GM13977 (cell line): ENCODE measurements at regions of chr6 and their contacts with region 1.

Region 1: DNA sequence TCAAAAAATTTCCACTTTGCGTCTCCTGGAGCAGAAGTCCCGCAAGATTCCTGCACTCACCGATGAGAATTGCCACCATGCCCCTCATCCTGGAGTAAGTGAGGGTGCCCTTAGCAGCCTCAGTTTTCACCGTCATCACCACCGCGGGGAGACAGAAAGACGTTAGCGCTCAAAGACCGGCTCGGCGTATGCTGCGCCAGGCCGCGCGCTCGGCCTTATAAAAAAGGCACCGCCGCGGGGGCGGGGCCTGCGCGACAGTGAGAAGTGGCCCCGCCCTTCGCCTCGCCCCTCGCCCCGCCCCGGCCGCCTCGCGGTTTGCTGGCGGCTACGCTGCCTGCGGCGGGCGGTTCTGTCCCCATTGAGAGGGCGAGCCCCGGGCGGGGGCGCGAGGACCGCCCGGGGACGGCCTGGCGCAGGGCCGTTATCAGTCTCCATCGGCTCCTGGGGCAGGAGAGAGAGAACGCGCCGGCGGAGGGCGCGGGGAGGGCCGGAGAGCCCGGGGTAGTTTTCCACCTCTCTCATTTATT is 122.3 kb upstream of the SLC2A12 start:
- DNase-seq: peak; percentile 94
- CTCF ChIP-seq: peak; percentile 13

Region 2: GRCh38 chr6:134416418-134417154 is 241.9 kb after region 1 on chr6:
- in situ Hi-C with region 1: no loop called
- DNase-seq: no peak
- CTCF ChIP-seq: no peak

Region 3: GRCh38 chr6:134640975-134641429 is 466.3 kb after region 1 on chr6:
- in situ Hi-C with region 1: loop called (anchors 10 kb)
- DNase-seq: peak; percentile 66
- CTCF ChIP-seq: peak; percentile 88

Region 4: DNA sequence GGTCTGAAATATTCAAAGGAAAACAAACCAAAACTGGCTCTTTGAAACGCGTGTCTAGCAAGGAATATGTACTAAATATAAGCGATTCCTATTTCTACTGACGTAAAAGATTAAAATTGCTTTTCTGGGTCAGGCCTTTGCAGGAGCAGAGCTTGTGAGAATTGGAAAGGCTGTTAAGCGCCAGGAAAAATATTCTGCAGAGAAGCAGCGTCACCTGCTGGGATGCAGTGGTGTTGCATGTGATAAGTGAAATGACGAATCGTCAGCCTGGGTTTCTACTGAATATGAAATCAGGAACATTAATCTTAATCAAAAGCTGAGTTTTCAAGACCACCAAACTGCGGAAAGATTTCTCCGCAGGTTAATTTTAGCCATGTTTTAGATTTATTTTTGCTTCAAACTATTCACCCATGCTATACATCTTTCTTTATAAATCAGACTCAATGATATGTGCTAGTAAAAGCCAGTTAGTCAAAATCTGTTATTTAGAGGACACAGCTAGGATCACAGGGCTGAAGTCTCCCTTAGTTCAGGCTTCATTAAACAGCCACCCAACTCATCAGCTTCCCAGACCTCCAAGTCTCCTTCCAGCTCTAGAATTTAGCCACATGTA is 707.8 kb after region 1 on chr6:
- in situ Hi-C with region 1: loop called (anchors 25 kb)
- DNase-seq: peak; percentile 48
- CTCF ChIP-seq: peak; percentile 97

Region 5: DNA sequence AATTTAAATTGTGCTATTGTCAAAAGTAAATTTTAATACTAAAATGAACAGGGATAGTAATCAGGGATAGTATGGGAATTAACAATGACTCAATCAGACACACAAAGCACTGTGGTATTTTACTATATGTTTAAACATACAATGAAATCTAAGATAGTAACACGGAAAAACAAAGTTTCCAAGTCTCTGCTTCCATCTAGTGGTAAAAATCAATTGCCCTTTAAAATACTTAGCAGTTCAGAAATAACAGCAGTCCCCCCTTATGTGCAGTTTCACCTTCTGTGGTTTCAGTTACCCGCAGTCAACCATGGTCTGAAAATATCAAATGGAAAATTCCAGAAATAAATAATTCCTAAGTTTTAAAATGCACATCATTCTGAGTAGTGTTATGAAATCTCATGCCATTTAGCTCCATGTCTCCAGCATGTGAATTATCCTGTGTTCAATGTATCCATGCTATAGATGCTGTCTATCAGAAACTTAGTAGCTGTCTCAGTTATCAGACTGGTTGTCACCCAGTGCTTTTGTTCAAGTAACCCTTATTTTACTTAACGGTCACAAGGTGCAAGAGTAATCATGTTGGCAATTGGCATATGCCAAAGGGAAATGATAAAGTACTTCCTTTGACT is 1264.3 kb after region 1 on chr6:
- in situ Hi-C with region 1: loop called (anchors 25 kb)
- DNase-seq: peak; percentile 23
- CTCF ChIP-seq: peak; percentile 66